ENCODE measurements at regions of chr4 and their contacts with region 1.

Region 1: GRCh38 chr4:3257556-3258482 is 8.9 kb downstream of the MSANTD1 start:
- DNase-seq: peak; percentile 44
- ATAC-seq: peak; percentile 72
- H3K4me3 Mint-ChIP-seq: peak overlapping the region; percentile 50
- H3K27ac Mint-ChIP-seq: peak overlapping the region; percentile 73
- H3K4me1 Mint-ChIP-seq: peaks cover 24% of the 10 kb centered on the region
- H3K27me3 Mint-ChIP-seq: no peaks in the 10 kb centered on the region
- CTCF ChIP-seq: no peak

Region 2: GRCh38 chr4:3074078-3074795 is 183.6 kb before region 1 on chr4 and contains the starts of genes HTT and HTT-AS:
- CTCF ChIA-PET with region 1: no interaction called
- POLR2A ChIA-PET with region 1: no interaction called
- intact Hi-C with region 1: no loop called
- DNase-seq: peak; percentile 93
- ATAC-seq: peak; percentile 77
- H3K4me3 Mint-ChIP-seq: peak within 1 kb of the TSS; percentile 92
- H3K27ac Mint-ChIP-seq: peak within 1 kb of the TSS; percentile 95
- H3K4me1 Mint-ChIP-seq: peaks cover 39% of the 10 kb centered on the region
- H3K27me3 Mint-ChIP-seq: no peaks in the 10 kb centered on the region
- CTCF ChIP-seq: no peak
- total RNA-seq, gene HTT: 239 and 242 TPM in 2 replicates
- total RNA-seq, gene HTT-AS: not detected in 2 replicates

Region 3: GRCh38 chr4:3285558-3286334 is 27.9 kb after region 1 on chr4:
- CTCF ChIA-PET with region 1: no interaction called
- POLR2A ChIA-PET with region 1: interaction called, 6 read pairs
- intact Hi-C with region 1: loop called (anchors 2 kb)
- DNase-seq: peak; percentile 55
- ATAC-seq: peak; percentile 96
- H3K4me3 Mint-ChIP-seq: peak overlapping the region; percentile 63
- H3K27ac Mint-ChIP-seq: peak overlapping the region; percentile 66
- H3K4me1 Mint-ChIP-seq: peaks cover 13% of the 10 kb centered on the region
- H3K27me3 Mint-ChIP-seq: peaks cover 10% of the 10 kb centered on the region
- CTCF ChIP-seq: no peak

Measured in activated B cell treated with CpG ODN at 0.5 μM for 24 hours (primary cell).